Heart left ventricle (tissue), 16 donors: ENCODE measurements at regions of chr12 and their contacts with region 1.

Region 1: GRCh38 chr12:123972457-123973401 is at the starts of genes CCDC92 and ZNF664:
- DNase-seq: peak; percentile 94 to 96 (median 95)
- ATAC-seq: peak; percentile 92 to 96 (median 94)
- H3K4me3 ChIP-seq: peak within 1 kb of the TSS; percentile 71 to 98 (median 92)
- H3K27ac ChIP-seq: peak within 1 kb of the TSS; percentile 87 to 99 (median 94)
- H3K4me1 ChIP-seq: peaks cover 0 to 47% (median 22%) of the 10 kb centered on the region in 12 donors
- H3K27me3 ChIP-seq: no peaks in the 10 kb centered on the region
- CTCF ChIP-seq: peak in 5 of 12 donors; percentile 15 to 38 (median 32)
- POLR2A ChIP-seq: peak; percentile 23 to 24
- total RNA-seq, gene CCDC92: 37.8 to 77.6 (median 57.3) TPM
- total RNA-seq, gene ZNF664: 59.8 to 104 (median 78.0) TPM

Region 2: GRCh38 chr12:123655420-123655819 is 317.3 kb before region 1 on chr12:
- intact Hi-C with region 1: loop called in 1 of 10 experiments (anchors 10 kb)
- DNase-seq: peak in 4 of 5 donors; percentile 58 to 74 (median 66)
- ATAC-seq: peak; percentile 82 to 95 (median 92)
- H3K4me3 ChIP-seq: no peak overlapping the region
- H3K27ac ChIP-seq: peak overlapping the region in 1 of 12 donors; percentile 19
- H3K4me1 ChIP-seq: peaks cover 0 to 21% (median 1%) of the 10 kb centered on the region in 12 donors
- H3K27me3 ChIP-seq: no peaks in the 10 kb centered on the region
- CTCF ChIP-seq: no peak
- POLR2A ChIP-seq: no peak

Region 3: DNA sequence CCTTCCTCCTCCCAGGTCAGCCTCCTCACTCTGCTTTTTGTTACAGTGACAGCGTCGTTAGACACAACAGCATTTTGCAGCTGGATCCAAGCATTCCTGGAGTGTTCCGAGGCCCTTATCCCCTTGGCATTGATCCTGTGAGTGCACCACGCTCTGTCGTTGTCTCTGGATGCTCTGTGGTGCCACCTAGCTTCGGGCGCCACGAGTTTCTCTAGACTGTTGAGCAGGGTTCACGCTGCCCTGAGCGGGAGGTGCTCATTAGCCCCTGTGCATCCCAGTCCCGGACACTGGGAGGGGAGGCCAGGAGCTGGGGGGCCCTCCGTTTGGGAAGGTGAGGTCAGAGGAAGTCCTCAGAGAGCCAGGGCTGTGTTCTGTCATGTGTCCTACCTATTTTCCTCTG is 227.9 kb before region 1 on chr12:
- intact Hi-C with region 1: no loop called
- DNase-seq: no peak
- ATAC-seq: peak in 1 of 4 donors; percentile 50
- H3K4me3 ChIP-seq: no peak overlapping the region
- H3K27ac ChIP-seq: no peak overlapping the region
- H3K4me1 ChIP-seq: peaks cover 0 to 20% (median 0%) of the 10 kb centered on the region in 12 donors
- H3K27me3 ChIP-seq: no peaks in the 10 kb centered on the region
- CTCF ChIP-seq: peak in 4 of 12 donors; percentile 11 to 22 (median 18)
- POLR2A ChIP-seq: no peak